CD4-positive, alpha-beta T cell (primary cell): ENCODE measurements at regions of chr3 and their contacts with region 1.

Region 1: GRCh38 chr3:15291589-15292541 is 40.5 kb downstream of the SH3BP5 start:
- DNase-seq: peak; percentile 24 to 90 (median 54)
- ATAC-seq: peak; percentile 90
- H3K4me3 ChIP-seq: peak overlapping the region; percentile 17
- H3K4me3 Mint-ChIP-seq: peak overlapping the region; percentile 81
- H3K27ac ChIP-seq: peak overlapping the region; percentile 46 to 71
- H3K27ac Mint-ChIP-seq: peak overlapping the region; percentile 94
- H3K4me1 ChIP-seq: peaks cover 89% of the 10 kb centered on the region
- H3K4me1 Mint-ChIP-seq: peaks cover 96% of the 10 kb centered on the region
- H3K27me3 ChIP-seq: no peaks in the 10 kb centered on the region
- H3K27me3 Mint-ChIP-seq: no peaks in the 10 kb centered on the region
- CTCF ChIP-seq: no peak

Region 2: DNA sequence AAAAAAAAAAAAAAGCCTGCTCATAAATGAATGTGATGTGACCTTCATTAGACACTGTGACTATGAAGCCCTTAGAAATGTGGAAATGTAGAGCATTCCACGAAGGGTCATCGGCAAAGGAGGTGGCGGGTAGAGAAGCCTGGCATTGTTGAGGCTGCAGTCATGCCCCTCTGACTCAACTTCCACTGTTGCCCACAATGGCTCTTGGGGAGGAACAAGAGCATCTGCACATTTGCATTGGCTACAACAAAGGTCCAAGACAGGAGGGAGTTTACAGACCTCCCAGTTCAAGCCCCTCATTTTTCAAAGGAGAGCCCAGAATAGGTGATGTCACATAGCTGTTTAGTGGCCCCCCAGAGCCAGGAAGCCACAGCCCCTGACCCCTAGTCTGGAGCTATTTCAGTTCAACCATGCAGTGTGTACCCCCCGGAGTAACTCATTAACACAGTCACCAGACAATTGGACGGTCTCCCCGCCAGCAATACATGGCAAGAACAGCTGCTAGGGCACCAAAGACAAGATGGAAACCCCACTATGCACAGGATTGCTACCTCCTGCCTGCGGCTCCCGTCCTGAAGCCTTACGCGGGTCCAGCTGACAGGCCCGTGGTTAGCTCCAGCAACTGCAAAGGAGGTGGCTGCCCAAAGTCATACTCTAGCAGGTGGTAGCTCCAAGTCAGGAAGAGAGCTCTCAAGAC is 15.7 kb before region 1 on chr3:
- CTCF ChIA-PET with region 1: interaction called, 6 read pairs
- POLR2A ChIA-PET with region 1: interaction called, 13 read pairs
- intact Hi-C with region 1: loop called (anchors 1 to 2 kb)
- DNase-seq: no peak
- ATAC-seq: no peak
- H3K4me3 ChIP-seq: no peak overlapping the region
- H3K4me3 Mint-ChIP-seq: no peak overlapping the region
- H3K27ac ChIP-seq: peak overlapping the region in 1 of 2 donors; percentile 7
- H3K27ac Mint-ChIP-seq: peak overlapping the region; percentile 19
- H3K4me1 ChIP-seq: peaks cover 92% of the 10 kb centered on the region
- H3K4me1 Mint-ChIP-seq: peaks cover 92% of the 10 kb centered on the region
- H3K27me3 ChIP-seq: no peaks in the 10 kb centered on the region
- H3K27me3 Mint-ChIP-seq: no peaks in the 10 kb centered on the region
- CTCF ChIP-seq: no peak

Region 3: DNA sequence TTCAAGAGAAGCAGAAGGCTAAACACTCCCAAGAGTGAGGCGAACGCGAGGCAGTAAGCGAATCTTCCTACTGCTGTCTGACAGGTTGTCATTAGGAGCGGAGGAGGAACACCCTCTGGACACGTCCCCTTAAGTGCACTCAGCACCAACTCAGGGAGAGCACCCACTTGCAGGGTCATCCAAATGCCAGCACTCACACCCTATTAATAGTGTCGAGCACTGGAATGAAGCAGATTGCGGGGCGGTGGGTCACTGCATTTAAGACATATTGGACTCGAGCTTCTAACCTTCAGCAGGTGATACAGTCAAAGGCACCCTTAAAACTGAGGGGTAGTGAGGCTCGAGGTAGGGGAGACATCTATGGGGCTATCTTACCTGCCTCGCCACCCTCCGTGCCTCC is 11.9 kb after region 1 on chr3:
- CTCF ChIA-PET with region 1: no interaction called
- POLR2A ChIA-PET with region 1: interaction called, 15 read pairs
- intact Hi-C with region 1: loop called in 1 of 2 experiments (anchors 2 kb)
- DNase-seq: no peak
- ATAC-seq: no peak
- H3K4me3 ChIP-seq: peak overlapping the region; percentile 36
- H3K4me3 Mint-ChIP-seq: peak overlapping the region; percentile 49
- H3K27ac ChIP-seq: no peak overlapping the region
- H3K27ac Mint-ChIP-seq: peak overlapping the region; percentile 82
- H3K4me1 ChIP-seq: peaks cover 69% of the 10 kb centered on the region
- H3K4me1 Mint-ChIP-seq: peaks cover 73% of the 10 kb centered on the region
- H3K27me3 ChIP-seq: no peaks in the 10 kb centered on the region
- H3K27me3 Mint-ChIP-seq: no peaks in the 10 kb centered on the region
- CTCF ChIP-seq: no peak

Region 4: GRCh38 chr3:15309662-15310335 is 17.9 kb after region 1 on chr3:
- CTCF ChIA-PET with region 1: interaction called, 3 read pairs
- POLR2A ChIA-PET with region 1: interaction called, 15 read pairs
- intact Hi-C with region 1: loop called in 1 of 2 experiments (anchors 2 kb)
- DNase-seq: no peak
- ATAC-seq: no peak
- H3K4me3 ChIP-seq: no peak overlapping the region
- H3K4me3 Mint-ChIP-seq: peak overlapping the region; percentile 26
- H3K27ac ChIP-seq: no peak overlapping the region
- H3K27ac Mint-ChIP-seq: peak overlapping the region; percentile 84
- H3K4me1 ChIP-seq: peaks cover 76% of the 10 kb centered on the region
- H3K4me1 Mint-ChIP-seq: peaks cover 67% of the 10 kb centered on the region
- H3K27me3 ChIP-seq: no peaks in the 10 kb centered on the region
- H3K27me3 Mint-ChIP-seq: no peaks in the 10 kb centered on the region
- CTCF ChIP-seq: no peak

Region 5: GRCh38 chr3:15319575-15319974 is 27.7 kb after region 1 on chr3:
- CTCF ChIA-PET with region 1: interaction called, 6 read pairs
- POLR2A ChIA-PET with region 1: interaction called, 13 read pairs
- intact Hi-C with region 1: no loop called
- DNase-seq: no peak
- ATAC-seq: no peak
- H3K4me3 ChIP-seq: no peak overlapping the region
- H3K4me3 Mint-ChIP-seq: peak overlapping the region; percentile 43
- H3K27ac ChIP-seq: no peak overlapping the region
- H3K27ac Mint-ChIP-seq: peak overlapping the region; percentile 77
- H3K4me1 ChIP-seq: peaks cover 73% of the 10 kb centered on the region
- H3K4me1 Mint-ChIP-seq: peaks cover 75% of the 10 kb centered on the region
- H3K27me3 ChIP-seq: no peaks in the 10 kb centered on the region
- H3K27me3 Mint-ChIP-seq: no peaks in the 10 kb centered on the region
- CTCF ChIP-seq: no peak